ENCODE measurements at regions of chr2 and their contacts with region 1.

Region 1: DNA sequence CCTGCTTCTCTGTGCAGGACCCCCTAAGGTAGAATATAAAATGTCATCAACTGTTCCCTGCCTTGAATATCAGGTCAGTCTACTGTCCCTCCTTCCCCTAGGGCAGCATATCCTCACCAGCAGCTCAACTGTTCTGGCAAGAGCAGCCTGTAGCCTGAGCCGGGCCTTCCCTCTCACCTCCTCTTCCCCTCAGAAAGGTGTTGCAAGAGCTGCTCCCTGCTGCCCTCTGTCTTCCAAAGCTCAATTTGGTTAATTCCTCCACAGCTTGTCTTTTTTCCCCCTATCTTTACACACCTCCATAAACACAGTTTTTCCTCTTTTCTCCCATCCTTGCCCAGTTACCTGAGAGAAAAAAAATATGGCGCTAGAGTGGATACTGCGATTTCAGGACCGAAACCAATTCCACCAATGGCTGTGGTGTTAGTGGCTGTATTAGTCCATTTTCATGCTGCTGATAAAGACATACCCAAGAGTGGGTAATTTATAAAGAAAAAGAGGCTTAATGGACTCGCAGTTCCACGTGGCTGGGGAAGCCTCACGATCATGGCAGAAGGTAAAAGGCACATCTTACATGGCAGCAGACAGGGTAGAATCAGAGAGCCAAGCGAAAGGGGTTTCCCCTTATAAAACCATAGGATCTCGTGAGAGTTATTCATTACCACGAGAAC is 184.7 kb downstream of the MREG start:
- DNase-seq: peak; percentile 67
- H3K4me3 ChIP-seq: no peak overlapping the region
- H3K27ac ChIP-seq: no peak overlapping the region
- H3K4me1 ChIP-seq: peaks cover 21% of the 10 kb centered on the region
- H3K27me3 ChIP-seq: no peaks in the 10 kb centered on the region
- CTCF ChIP-seq: peak; percentile 64 to 82

Region 2: DNA sequence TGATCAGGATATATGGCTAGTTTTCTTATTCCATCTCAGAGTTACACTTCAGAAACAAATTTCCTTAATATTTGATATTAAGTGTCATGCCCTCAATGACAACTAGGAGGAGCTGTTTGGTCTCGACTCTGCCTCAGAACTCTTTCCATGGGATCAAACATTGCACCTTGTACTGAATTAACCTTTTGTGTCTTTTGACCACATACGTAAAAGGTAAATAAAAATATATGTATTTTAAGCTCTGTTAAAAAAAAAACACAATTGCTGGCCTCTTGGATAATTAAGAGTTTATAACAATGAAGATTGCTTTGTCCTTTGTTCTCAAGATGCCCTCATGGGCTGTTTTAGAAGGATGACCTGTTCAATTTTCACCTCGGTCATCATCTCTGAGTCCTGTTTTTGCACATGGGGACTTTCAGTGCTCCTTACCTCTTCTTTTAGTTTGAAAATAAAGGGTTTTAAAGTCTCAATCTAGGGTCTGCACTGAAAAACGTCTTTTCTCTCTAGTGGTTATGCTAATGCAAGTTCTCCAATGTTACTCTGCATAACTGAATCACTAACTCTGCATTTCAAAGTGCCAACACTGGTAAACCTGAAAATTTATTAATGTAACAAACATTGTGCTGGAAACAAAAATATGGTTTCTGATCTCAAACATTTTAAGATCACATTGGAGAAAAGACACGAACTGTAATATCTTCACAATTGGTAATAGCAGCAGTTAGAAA is 374.0 kb before region 1 on chr2:
- CTCF ChIA-PET with region 1: interaction called, 4 read pairs
- dilution Hi-C with region 1: no loop called
- in situ Hi-C with region 1: no loop called
- intact Hi-C with region 1: loop called (anchors 1 kb)
- DNase-seq: peak; percentile 43
- H3K4me3 ChIP-seq: no peak overlapping the region
- H3K27ac ChIP-seq: no peak overlapping the region
- H3K4me1 ChIP-seq: peaks cover 6% of the 10 kb centered on the region
- H3K27me3 ChIP-seq: no peaks in the 10 kb centered on the region
- CTCF ChIP-seq: peak; percentile 84 to 87

Region 3: DNA sequence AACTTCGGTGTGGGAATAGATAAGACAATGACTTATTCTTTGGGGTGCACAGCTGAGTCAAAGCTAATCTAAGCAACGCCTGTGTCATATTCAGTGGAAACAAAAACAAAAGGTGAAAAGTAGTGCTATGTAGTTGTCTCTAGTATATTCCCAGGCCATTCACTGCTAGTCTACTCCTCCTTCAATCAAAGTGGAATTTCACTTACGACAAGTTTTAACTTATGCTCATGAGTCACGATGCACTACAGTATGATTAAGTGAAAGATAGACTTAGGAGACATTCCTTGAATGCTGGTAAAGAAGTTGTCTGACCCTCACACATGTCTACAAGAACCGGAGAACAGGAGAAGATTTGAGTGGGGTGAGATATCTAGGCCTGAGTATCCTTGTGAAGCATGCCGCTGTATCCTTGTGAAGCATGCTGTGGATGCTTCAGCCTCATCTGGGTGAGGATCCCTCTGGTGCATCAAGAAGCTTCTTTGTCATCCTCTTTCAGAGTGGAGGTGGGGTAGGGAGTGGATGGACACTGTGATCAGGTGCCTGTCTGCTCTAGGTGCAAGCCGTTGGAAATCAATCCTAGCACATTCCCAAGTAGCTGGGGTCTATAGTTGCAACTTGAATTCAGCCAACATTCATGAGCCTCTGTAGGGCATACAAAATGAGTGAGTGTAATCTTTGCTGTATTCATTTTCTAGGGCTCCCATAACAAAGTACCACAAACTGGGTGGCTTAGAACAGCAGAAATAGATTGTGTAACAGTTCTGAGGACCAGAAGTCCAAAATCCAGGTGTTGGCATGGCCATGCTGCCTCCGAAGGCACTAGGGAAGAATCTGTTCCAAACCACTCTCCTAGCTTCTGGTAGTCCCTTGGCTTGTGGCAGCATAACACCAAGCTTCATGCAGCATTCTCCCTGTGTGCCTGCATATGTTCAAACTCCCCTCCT is 219.3 kb before region 1 on chr2:
- CTCF ChIA-PET with region 1: no interaction called
- dilution Hi-C with region 1: no loop called
- in situ Hi-C with region 1: no loop called
- intact Hi-C with region 1: loop called (anchors 10 kb)
- DNase-seq: peak; percentile 98
- H3K4me3 ChIP-seq: no peak overlapping the region
- H3K27ac ChIP-seq: peak overlapping the region; percentile 87
- H3K4me1 ChIP-seq: peaks cover 17% of the 10 kb centered on the region
- H3K27me3 ChIP-seq: no peaks in the 10 kb centered on the region
- CTCF ChIP-seq: no peak

Region 4: DNA sequence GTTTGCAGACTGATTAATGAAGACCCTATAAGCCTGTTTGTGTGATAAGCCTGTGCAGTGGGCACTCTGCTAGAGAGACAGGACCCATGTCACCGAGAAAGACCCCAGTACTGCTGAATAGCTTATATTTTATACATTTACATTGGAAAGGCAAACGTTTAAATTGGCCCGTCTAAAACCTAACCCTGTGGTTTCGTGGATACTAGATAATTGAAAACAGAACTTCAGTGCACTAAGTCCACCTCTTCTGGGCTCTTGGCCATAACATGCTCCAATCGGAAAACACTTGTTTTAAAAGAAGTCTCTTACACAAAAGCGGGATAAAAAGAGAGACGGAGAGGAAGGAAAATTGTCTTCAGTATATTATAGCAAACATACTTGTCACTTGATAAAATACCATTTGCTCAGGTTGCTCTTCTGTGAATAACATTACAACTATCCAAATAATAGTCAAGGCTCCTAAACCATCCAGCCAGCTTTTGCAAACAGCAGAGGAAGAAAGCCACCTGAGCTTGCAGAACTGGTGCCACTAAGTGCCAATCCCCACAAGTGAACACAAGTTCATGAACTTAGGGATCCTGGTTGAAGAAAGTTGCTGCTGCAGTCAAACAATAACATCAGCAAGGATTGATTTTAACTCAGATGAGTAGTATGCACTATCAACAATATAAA is 174.4 kb before region 1 on chr2:
- CTCF ChIA-PET with region 1: no interaction called
- dilution Hi-C with region 1: no loop called
- in situ Hi-C with region 1: no loop called
- intact Hi-C with region 1: no loop called
- DNase-seq: no peak
- H3K4me3 ChIP-seq: no peak overlapping the region
- H3K27ac ChIP-seq: no peak overlapping the region
- H3K4me1 ChIP-seq: peaks cover 16% of the 10 kb centered on the region
- H3K27me3 ChIP-seq: no peaks in the 10 kb centered on the region
- CTCF ChIP-seq: no peak

Region 5: GRCh38 chr2:215728504-215729087 is 100.1 kb before region 1 on chr2:
- CTCF ChIA-PET with region 1: no interaction called
- dilution Hi-C with region 1: no loop called
- in situ Hi-C with region 1: no loop called
- intact Hi-C with region 1: loop called (anchors 5 kb)
- DNase-seq: peak; percentile 99
- H3K4me3 ChIP-seq: no peak overlapping the region
- H3K27ac ChIP-seq: peak overlapping the region; percentile 76
- H3K4me1 ChIP-seq: peaks cover 36% of the 10 kb centered on the region
- H3K27me3 ChIP-seq: no peaks in the 10 kb centered on the region
- CTCF ChIP-seq: no peak

Region 6: DNA sequence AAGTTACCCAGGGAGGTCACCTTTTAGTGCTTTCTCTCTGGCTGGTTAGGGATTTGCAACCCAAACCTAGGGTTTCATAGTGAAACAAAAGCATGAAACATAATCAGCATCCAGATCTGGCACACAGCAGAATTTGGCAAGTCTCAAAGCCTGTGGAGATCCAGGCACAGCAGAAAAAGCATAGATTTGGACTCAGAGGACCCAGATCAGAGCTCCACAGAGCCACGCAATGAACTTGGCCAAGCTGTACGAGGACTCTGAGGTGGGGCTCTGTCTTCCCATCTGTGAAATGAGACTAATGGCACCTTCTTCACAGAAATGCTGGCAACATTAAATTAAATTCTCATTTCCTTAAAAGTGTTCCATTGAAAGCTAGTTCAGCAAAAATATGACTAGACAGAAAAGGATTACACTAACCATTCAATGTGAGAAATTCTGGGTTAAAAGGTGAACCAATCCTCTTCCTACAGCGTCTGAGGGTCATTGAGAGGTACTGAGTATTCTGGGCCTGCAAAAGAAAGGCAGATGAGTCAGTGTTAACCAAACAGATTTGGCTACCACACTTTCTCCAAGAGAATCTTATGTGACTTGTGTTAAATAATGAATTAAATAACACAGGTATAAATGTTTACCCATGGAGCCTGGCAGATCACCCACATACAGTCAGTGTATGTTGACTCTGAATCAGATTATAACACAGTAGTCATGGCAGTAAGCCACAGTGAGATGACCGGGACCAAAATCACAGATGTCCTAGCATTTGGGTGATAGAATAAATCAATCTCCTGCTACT is 81.6 kb before region 1 on chr2:
- CTCF ChIA-PET with region 1: no interaction called
- dilution Hi-C with region 1: no loop called
- in situ Hi-C with region 1: no loop called
- intact Hi-C with region 1: no loop called
- DNase-seq: peak; percentile 41
- H3K4me3 ChIP-seq: no peak overlapping the region
- H3K27ac ChIP-seq: no peak overlapping the region
- H3K4me1 ChIP-seq: peaks cover 15% of the 10 kb centered on the region
- H3K27me3 ChIP-seq: no peaks in the 10 kb centered on the region
- CTCF ChIP-seq: no peak

Region 7: DNA sequence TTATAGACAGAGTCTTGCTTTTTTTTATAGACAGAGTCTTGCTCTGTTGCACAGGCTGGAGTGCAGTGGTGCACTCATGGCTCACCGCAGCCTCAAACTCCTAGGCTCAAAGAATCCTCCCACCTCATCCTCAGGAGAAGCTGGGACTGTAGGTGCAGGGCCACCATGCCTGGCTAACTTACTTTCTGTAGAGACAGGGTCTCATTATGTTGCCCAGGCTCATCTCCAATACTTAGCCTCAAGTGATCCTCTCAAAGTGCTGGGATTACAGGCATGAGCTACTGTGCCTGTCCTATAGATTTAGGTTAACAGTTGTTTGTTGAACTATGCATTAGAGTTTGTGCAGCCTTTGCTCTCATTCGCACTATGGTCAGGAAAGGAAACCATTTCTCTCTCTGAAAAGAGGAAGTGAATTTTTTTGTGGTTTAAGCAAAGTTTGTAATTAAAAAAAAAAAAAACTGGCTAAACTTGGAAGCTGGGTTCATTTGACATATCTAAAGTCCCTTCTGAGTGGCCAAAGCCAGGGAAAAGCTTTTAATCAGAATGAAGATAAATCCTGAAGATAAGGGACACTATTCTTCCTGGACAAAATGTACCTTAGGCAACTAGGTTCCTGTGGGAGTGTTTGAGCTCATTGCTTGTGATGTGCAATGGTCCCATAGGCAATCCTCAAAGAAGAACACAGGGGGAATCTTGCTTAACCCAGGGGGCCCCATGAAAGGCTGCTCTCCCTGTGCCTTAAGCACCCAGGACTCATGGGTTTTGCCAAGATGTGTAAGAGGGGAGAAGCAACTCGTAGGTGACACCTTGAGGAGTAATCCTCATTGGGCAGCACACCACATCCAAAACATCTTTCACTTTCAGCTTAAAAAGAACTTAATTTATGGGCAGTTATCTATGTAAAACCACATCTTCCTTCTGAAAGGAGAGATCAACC is 17.0 kb before region 1 on chr2:
- CTCF ChIA-PET with region 1: no interaction called
- dilution Hi-C with region 1: no loop called
- in situ Hi-C with region 1: no loop called
- intact Hi-C with region 1: no loop called
- DNase-seq: no peak
- H3K4me3 ChIP-seq: no peak overlapping the region
- H3K27ac ChIP-seq: no peak overlapping the region
- H3K4me1 ChIP-seq: peaks cover 23% of the 10 kb centered on the region
- H3K27me3 ChIP-seq: no peaks in the 10 kb centered on the region
- CTCF ChIP-seq: no peak

Region 8: DNA sequence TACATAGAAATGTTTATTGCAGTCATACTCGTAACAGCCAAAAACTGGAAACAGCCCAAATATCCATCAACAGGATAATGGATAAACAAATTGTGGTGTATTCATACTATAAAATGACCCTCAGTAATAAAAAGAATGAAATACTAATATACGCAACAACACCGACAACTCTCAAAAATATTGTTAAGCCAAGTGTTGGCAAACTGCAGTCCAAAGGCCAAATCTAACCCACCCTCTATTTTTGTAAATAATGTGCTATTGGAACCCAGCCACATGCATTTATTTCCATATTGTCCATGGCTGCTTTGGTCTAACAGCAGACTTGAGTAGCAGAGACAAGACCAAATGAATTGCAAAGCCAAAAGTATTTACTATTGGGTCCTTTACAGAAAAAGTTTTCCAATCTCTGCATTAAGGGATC is 33.7 kb after region 1 on chr2:
- CTCF ChIA-PET with region 1: no interaction called
- dilution Hi-C with region 1: no loop called
- in situ Hi-C with region 1: no loop called
- intact Hi-C with region 1: no loop called
- DNase-seq: no peak
- H3K4me3 ChIP-seq: no peak overlapping the region
- H3K27ac ChIP-seq: no peak overlapping the region
- H3K4me1 ChIP-seq: no peaks in the 10 kb centered on the region
- H3K27me3 ChIP-seq: no peaks in the 10 kb centered on the region
- CTCF ChIP-seq: no peak

Region 9: DNA sequence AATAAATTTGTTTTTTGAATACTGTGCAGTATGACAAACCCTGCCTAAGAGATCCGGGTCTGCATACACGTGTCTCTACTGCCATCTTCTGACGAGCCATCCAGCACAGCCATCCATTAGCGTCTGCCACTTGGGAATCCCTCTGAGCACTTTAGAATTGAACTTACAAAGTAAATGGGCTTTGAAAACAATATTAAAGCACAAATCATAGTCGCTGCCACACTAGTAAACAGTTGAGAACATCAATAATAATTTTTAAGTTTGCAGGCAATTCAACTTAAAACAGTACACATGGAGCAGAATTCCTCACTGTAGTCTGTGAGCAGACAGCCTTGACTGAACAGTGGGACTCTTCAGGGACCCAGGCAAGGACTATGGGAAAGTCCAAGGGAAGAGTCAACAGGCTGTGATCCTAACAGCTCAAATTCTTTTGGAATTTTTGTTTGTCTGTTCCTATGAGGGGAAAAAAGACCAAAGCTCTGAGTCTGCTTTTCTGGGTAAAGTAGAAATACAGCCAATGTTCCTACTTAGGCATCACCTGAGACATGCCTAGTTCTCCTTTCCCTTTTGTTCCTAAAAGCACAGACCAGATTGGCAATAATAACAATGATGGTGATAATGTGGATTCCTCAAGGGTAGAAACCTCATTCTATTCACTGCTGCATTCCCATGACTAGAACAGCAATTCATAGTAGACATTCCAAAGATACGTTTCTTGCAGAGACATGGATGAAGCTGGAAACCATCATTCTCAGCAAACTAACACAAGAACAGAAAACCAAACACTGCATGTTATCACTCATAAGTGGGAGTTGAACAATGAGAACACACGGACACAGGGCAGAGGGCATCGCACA is 91.8 kb after region 1 on chr2:
- CTCF ChIA-PET with region 1: no interaction called
- dilution Hi-C with region 1: no loop called
- in situ Hi-C with region 1: no loop called
- intact Hi-C with region 1: loop called (anchors 2 kb)
- DNase-seq: peak; percentile 62
- H3K4me3 ChIP-seq: no peak overlapping the region
- H3K27ac ChIP-seq: no peak overlapping the region
- H3K4me1 ChIP-seq: peaks cover 22% of the 10 kb centered on the region
- H3K27me3 ChIP-seq: no peaks in the 10 kb centered on the region
- CTCF ChIP-seq: peak; percentile 83 to 93